ENCODE measurements at regions of chr12 and their contacts with region 1.

Region 1: GRCh38 chr12:118979763-118980406 is 1.5 kb upstream of the SRRM4 start:
- DNase-seq: no peak

Region 2: GRCh38 chr12:119544765-119545625 is 565.1 kb after region 1 on chr12:
- intact Hi-C with region 1: loop called (anchors 10 kb)
- DNase-seq: no peak

Measured in cardiac septum (tissue), 1 donor.